Prostate gland (tissue), 2 donors: ENCODE measurements at regions of chr1 and their contacts with region 1.

Region 1: DNA sequence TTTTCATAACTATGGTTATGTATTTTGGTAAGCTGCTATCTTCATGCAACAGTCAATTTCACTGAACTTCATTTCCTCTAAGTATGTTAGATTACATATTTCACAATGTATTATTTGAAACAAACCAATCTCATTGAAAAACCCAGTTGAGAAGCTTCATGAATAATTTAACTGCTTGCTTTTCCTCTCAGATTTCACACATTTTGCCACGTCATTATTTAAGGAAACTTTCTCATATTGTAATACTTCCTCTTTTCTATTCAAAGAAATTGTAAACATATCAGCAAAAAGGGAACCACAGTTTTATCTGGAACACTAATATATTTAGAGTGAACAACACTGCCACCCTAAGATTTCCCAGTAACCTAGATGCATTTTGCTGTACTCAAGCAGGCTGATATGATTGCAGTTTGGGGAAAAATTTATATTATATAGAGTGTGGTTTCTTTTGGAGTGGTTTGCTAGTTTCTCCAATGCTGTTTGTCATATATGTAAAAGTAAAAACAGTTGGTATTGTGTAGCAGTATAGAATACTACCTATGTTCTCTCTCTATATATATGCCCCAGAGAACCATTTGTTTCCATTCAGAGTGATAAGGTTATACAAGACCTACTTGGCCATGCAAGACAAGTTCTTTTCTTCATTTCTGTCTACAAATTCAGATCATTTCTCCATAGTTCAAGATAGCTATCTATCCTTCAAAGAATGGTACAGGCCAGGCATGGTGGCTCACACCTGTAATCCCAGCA is 28.4 kb upstream of the AHCTF1 start:
- DNase-seq: no peak
- H3K4me3 ChIP-seq: no peak overlapping the region
- H3K27ac ChIP-seq: no peak overlapping the region
- H3K4me1 ChIP-seq: no peaks in the 10 kb centered on the region
- H3K27me3 ChIP-seq: no peaks in the 10 kb centered on the region
- CTCF ChIP-seq: no peak
- POLR2A ChIP-seq: no peak

Region 2: DNA sequence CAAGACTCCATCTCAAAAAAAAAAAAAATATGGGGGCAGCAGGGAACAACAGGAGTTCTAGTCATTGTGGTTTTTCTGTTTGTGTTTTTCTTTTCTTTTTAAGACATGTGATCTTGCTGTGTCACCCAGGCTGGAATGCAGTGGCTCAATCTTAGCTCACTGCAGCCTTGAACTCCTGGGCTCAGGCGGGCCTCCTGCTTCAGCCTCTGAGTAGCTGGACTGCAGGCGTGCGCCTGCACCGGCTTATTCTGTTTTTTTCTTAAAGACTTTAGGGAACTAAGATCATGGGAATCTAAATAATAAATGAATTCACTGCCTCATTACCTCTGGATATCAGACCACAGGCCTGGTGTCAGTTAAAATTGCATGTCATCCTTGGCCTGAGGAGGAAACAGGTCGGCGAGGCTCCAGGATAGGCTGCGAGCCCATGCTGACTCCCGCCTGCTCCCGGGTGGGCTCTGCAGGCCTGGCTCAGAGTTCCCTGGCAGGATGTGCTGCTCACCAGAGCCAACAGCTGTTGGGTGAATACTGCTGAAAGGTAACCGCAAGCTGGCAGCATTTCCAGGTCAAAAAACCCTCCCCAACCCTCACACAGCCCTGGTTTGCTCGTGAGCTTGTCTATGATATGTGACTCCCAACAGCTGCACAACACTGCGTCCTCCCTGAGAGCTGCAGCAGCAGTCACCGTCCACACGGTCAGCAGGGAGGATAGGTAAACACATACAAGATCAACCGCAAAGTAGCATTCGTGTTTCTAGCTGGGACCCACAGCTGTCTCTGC is 177.8 kb before region 1 on chr1:
- intact Hi-C with region 1: loop called (anchors 10 kb)
- DNase-seq: no peak
- H3K4me3 ChIP-seq: no peak overlapping the region
- H3K27ac ChIP-seq: no peak overlapping the region
- H3K4me1 ChIP-seq: no peaks in the 10 kb centered on the region
- H3K27me3 ChIP-seq: no peaks in the 10 kb centered on the region
- CTCF ChIP-seq: no peak
- POLR2A ChIP-seq: no peak

Region 3: DNA sequence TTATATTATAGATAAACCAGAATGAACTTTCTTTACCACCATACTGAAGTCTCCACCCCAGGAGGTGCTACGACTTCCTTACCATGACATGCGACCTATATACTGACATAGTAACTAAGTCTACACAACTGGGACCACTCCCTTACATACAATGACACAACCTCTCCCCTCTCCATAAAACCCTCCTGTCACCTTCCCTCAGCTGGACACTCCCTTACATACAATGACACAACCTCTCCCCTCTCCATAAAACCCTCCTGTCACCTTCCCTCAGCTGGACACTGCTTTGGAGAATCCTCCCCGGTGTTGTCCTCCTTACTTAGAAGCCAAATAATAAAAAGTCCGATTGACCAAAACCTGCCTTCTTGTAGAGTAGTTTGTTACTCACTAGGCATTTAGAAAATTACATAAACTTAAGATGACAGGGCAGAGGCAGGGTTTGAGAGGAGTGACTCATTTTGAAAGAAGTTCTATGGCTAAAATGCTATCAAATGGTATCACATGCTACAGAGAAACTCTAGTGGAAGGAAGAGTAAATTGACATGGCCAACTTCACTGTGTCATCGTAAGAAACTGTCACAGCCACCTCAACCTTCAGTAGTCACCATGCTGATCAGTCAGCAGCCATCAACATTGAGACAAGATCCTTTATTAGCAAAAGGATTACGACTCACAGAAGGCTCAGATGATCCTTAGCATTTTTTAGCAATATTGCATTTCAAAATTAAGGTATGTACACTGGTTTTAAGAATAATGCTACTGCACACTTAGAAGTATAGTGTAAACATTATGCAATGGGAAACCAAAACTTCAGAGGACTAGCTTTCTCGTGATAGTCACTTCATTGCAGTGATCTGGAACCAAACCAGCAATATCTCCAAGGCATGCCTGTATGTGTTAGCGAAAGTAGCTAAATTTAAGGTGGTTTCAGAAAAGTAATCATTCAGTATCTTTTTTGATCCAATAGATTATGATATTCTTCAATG is 84.8 kb before region 1 on chr1:
- intact Hi-C with region 1: no loop called
- DNase-seq: no peak
- H3K4me3 ChIP-seq: no peak overlapping the region
- H3K27ac ChIP-seq: no peak overlapping the region
- H3K4me1 ChIP-seq: no peaks in the 10 kb centered on the region
- H3K27me3 ChIP-seq: no peaks in the 10 kb centered on the region
- CTCF ChIP-seq: no peak
- POLR2A ChIP-seq: no peak